AG04450 (cell line): ENCODE measurements at regions of chr12 and their contacts with region 1.

Region 1: GRCh38 chr12:120086801-120087621 is 29.5 kb downstream of the RAB35 start:
- DNase-seq: peak; percentile 98
- H3K4me3 ChIP-seq: peak overlapping the region; percentile 68
- H3K27ac ChIP-seq: peak overlapping the region; percentile 81
- H3K27me3 ChIP-seq: no peaks in the 10 kb centered on the region
- CTCF ChIP-seq: peak; percentile 99

Region 2: DNA sequence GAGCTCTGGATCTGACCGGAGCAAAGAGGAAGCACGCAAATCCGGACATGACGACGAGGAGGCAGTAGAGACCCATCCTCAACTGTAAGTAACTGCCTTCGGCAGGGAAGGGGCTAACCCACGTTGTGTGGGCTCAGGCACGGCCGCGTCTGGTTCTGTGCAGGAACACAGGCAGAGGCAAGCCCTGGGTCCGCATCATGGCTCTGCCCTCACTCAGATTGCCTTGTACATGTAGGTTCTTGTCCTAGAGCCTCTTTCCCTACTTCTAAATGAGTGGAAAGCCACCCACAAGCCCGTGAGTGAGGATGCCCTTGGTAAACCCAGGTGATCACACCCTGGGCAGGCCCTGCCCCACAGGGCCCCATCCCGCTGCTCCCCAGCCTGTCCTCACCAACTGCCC is 122.8 kb after region 1 on chr12:
- CTCF ChIA-PET with region 1: no interaction called
- POLR2A ChIA-PET with region 1: no interaction called
- DNase-seq: no peak
- H3K4me3 ChIP-seq: no peak overlapping the region
- H3K27ac ChIP-seq: no peak overlapping the region
- H3K27me3 ChIP-seq: no peaks in the 10 kb centered on the region
- CTCF ChIP-seq: no peak

Region 3: GRCh38 chr12:121209624-121210572 is 1122.9 kb after region 1 on chr12 and contains the start of gene P2RX4:
- CTCF ChIA-PET with region 1: no interaction called
- POLR2A ChIA-PET with region 1: interaction called, 12 read pairs
- DNase-seq: no peak
- H3K4me3 ChIP-seq: peak within 1 kb of the TSS; percentile 65
- H3K27ac ChIP-seq: peak within 1 kb of the TSS; percentile 65
- H3K27me3 ChIP-seq: no peaks in the 10 kb centered on the region
- CTCF ChIP-seq: no peak
- polyA plus RNA-seq, gene P2RX4: 18.9 and 21.8 TPM in 2 replicates